ENCODE measurements at regions of chr16 and their contacts with region 1.

Region 1: DNA sequence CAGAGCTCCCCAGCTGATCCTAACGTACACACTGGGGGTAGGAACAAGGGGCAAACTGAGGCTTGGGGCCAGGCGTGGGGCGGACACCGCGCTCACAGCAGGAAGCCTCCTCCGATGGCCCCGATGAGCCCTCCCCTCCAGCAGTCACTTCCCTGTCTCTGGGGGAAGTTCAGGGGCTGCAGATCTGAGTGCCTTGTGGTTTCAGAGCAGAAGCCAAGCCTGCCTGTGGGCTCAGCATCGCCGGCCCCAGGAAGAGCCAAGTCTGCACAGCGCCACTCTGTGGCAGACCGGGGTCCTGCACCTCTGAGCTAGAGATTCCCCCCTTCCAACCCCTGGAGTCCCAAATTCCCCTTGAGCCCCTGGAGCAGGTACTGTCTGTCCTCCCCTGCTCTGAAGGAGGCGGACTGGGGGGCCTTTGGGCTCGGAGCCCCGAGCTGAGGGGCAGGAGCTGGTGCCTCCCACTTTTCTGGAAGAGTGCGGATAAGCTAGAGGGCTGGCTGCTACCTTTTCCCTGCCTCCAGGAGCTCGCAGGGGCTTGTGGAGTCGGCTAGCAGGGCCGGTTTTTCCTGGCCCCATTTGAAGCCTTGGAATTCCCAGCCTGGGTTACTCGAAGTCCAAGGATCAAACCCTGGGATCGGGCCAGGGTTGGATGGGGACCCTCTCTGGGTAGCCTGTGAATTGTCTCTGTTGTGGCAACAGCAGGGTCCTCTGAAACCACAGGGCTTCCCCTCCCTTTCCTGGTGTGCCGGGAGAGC is 2.9 kb downstream of the GSE1 start:
- DNase-seq: peak; percentile 48
- ATAC-seq: no peak
- H3K4me3 ChIP-seq: peak overlapping the region; percentile 85 to 91
- H3K27ac ChIP-seq: peak overlapping the region; percentile 90
- H3K4me1 ChIP-seq: peaks cover 18 to 52% of the 10 kb centered on the region in 2 experiments
- H3K27me3 ChIP-seq: no peaks in the 10 kb centered on the region
- CTCF ChIP-seq: peak in 2 of 3 experiments; percentile 99; a peak in 4 of 6 replicates
- POLR2A ChIP-seq: no peak
- RAD21 ChIP-seq: no peak

Region 2: DNA sequence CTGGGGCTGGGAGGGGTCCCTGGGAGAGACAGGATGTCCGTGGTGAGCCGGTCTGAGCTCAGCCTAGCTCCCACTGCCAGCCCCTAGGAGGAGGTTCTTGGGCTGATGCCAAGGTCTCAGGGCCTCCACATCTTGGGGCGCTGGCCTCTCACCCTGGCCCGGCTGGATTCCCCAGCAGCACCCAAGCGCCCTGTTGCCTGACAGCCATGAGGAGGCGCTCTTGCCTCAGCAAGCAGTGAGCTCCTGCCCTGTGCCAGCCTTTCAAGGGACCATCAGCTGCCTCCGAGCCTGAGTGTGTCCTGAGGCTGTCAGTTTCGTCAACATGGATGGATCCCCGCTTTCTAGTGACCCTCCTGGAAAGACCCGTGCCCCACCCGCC is 268.8 kb before region 1 on chr16:
- CTCF ChIA-PET with region 1: interaction called, 12 read pairs
- POLR2A ChIA-PET with region 1: interaction called, 3 read pairs
- RAD21 ChIA-PET with region 1: no interaction called
- intact Hi-C with region 1: loop called (anchors 1 kb)
- DNase-seq: no peak
- ATAC-seq: peak; percentile 66
- H3K4me3 ChIP-seq: no peak overlapping the region
- H3K27ac ChIP-seq: no peak overlapping the region
- H3K4me1 ChIP-seq: peaks cover 18 to 21% of the 10 kb centered on the region in 2 experiments
- H3K27me3 ChIP-seq: no peaks in the 10 kb centered on the region
- CTCF ChIP-seq: peak in 2 of 3 experiments; percentile 77 to 85; a peak in 5 of 6 replicates
- POLR2A ChIP-seq: no peak
- RAD21 ChIP-seq: peak; percentile 84

Region 3: DNA sequence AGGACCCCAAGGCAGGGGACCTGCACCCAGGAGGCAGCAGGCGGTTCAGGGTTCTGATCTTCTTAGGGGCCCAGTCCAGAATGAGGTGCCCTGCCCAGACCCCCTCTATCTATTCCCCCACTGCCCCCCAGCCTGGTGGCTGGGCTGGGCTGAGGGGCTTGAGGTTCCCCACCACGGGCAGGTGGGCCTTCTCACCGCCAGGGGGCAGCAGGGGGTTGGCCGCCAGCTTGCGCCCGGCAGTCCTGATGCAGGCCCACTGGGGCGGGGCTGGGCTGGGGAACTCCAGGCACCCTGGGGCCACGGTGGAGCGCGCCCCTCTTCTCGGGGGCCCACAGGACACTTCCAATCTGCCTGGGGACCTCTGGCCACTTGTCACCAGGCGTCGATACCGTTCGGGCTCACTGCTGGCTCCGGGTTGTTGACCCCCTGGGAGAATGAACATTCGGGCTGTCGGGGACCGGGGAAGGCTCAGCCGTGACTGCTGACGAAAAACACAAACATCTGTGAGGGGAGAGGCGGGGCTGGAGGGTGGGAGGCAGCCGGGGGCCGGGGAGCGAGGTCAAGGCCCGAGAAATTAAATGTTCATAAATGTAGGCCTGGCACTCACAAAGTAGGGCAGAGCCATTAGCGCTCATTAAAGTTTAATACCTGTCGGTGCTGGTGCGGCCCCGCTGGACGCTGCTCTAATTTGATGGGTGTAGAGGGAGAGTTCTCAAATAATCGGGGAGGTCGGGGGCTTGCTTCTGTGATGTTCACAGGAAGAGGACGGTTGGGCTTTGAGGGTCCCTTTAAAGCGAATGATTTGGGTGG is 222.2 kb before region 1 on chr16:
- CTCF ChIA-PET with region 1: interaction called, 24 read pairs
- POLR2A ChIA-PET with region 1: interaction called, 3 read pairs
- RAD21 ChIA-PET with region 1: interaction called in 1 of 2 experiments, 4 read pairs
- intact Hi-C with region 1: no loop called
- DNase-seq: no peak
- ATAC-seq: peak; percentile 54
- H3K4me3 ChIP-seq: no peak overlapping the region
- H3K27ac ChIP-seq: no peak overlapping the region; the same call in 1 of the 2 replicates
- H3K4me1 ChIP-seq: peaks cover 58 to 72% of the 10 kb centered on the region in 2 experiments
- H3K27me3 ChIP-seq: no peaks in the 10 kb centered on the region
- CTCF ChIP-seq: peak in 2 of 3 experiments; percentile 100; a peak in 4 of 6 replicates
- POLR2A ChIP-seq: no peak
- RAD21 ChIP-seq: no peak

Region 4: GRCh38 chr16:85554112-85554813 is 61.8 kb before region 1 on chr16:
- CTCF ChIA-PET with region 1: interaction called, 15 read pairs
- POLR2A ChIA-PET with region 1: interaction called, 11 read pairs
- RAD21 ChIA-PET with region 1: interaction called, 3 to 6 read pairs
- intact Hi-C with region 1: loop called (anchors 2 kb)
- DNase-seq: peak; percentile 80
- ATAC-seq: peak; percentile 56
- H3K4me3 ChIP-seq: peak overlapping the region; percentile 75 to 83
- H3K27ac ChIP-seq: peak overlapping the region; percentile 64
- H3K4me1 ChIP-seq: peaks cover 54 to 68% of the 10 kb centered on the region in 2 experiments
- H3K27me3 ChIP-seq: no peaks in the 10 kb centered on the region
- CTCF ChIP-seq: no peak
- POLR2A ChIP-seq: peak; percentile 42
- RAD21 ChIP-seq: no peak

Region 5: DNA sequence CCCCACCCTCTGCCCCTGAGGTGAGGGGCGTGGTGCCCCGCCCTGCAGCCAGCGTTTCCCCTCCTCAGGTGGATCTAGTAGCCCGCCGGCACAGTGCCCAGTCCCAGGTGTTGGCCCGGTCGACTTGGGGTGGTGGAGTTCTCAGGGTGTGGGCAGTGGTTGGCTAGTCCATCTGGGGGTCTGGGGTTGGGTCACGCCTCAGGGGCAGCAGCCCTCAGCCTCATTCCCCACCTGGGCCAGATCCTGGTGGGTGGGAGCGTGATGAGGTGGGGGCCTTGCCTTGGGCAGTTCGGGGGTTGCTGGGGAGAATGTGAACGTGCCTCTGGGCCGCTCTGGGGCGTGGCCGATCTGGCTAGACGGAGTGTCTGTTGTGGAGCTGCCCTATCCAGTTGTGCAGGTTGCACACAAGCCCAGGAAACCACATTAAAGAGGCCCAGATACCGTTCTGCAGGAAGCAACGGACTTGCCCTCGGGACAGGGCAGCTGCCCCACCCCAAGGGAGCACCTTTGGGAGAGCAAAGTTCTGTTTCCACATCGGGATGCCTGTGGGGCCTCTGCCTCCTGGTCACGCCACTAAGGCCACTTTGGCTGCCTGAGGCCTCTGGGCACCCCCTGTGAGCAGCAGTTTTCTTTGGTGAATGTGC is 29.1 kb after region 1 on chr16:
- CTCF ChIA-PET with region 1: interaction called, 9 read pairs
- POLR2A ChIA-PET with region 1: no interaction called
- RAD21 ChIA-PET with region 1: no interaction called
- intact Hi-C with region 1: loop called (anchors 1 kb)
- DNase-seq: peak; percentile 75
- ATAC-seq: peak; percentile 90
- H3K4me3 ChIP-seq: peak overlapping the region; percentile 6 to 47
- H3K27ac ChIP-seq: peak overlapping the region; percentile 32; the same call in 1 of the 2 replicates
- H3K4me1 ChIP-seq: peaks cover 25 to 53% of the 10 kb centered on the region in 2 experiments
- H3K27me3 ChIP-seq: no peaks in the 10 kb centered on the region
- CTCF ChIP-seq: no peak
- POLR2A ChIP-seq: no peak
- RAD21 ChIP-seq: no peak

Region 6: GRCh38 chr16:85935974-85936760 is 320.1 kb after region 1 on chr16:
- CTCF ChIA-PET with region 1: no interaction called
- POLR2A ChIA-PET with region 1: no interaction called
- RAD21 ChIA-PET with region 1: no interaction called
- intact Hi-C with region 1: no loop called
- DNase-seq: no peak
- ATAC-seq: no peak
- H3K4me3 ChIP-seq: no peak overlapping the region
- H3K27ac ChIP-seq: no peak overlapping the region
- H3K4me1 ChIP-seq: no peaks in the 10 kb centered on the region
- H3K27me3 ChIP-seq: peaks cover 32% of the 10 kb centered on the region; the same call in 1 of the 2 replicates
- CTCF ChIP-seq: no peak
- POLR2A ChIP-seq: no peak
- RAD21 ChIP-seq: no peak